ENCODE measurements at regions of chr12 and their contacts with region 1.

Region 1: GRCh38 chr12:110704748-110705147 is 15.8 kb upstream of the HVCN1 start:
- DNase-seq: no peak
- ATAC-seq: peak; percentile 70
- H3K4me3 ChIP-seq: no peak overlapping the region
- H3K27ac ChIP-seq: no peak overlapping the region
- H3K4me1 ChIP-seq: no peaks in the 10 kb centered on the region
- H3K27me3 ChIP-seq: no peaks in the 10 kb centered on the region
- CTCF ChIP-seq: no peak; the same call in 1 of the 2 replicates

Region 2: GRCh38 chr12:110718222-110718908 is 13.6 kb after region 1 on chr12:
- CTCF ChIA-PET with region 1: no interaction called
- POLR2A ChIA-PET with region 1: interaction called, 21 read pairs
- in situ Hi-C with region 1: no loop called
- intact Hi-C with region 1: no loop called
- DNase-seq: no peak
- ATAC-seq: no peak
- H3K4me3 ChIP-seq: no peak overlapping the region
- H3K27ac ChIP-seq: no peak overlapping the region
- H3K4me1 ChIP-seq: no peaks in the 10 kb centered on the region
- H3K27me3 ChIP-seq: no peaks in the 10 kb centered on the region
- CTCF ChIP-seq: no peak

Region 3: GRCh38 chr12:110826592-110827200 is 121.9 kb after region 1 on chr12:
- CTCF ChIA-PET with region 1: interaction called, 14 read pairs
- POLR2A ChIA-PET with region 1: no interaction called
- in situ Hi-C with region 1: no loop called
- intact Hi-C with region 1: loop called (anchors 2 kb)
- DNase-seq: peak; percentile 64
- ATAC-seq: peak; percentile 98
- H3K4me3 ChIP-seq: peak overlapping the region; percentile 15 to 45; a peak in 3 of 4 replicates
- H3K27ac ChIP-seq: no peak overlapping the region; the same call in 1 of the 2 replicates
- H3K4me1 ChIP-seq: no peaks in the 10 kb centered on the region; the same call in 1 of the 2 replicates
- H3K27me3 ChIP-seq: no peaks in the 10 kb centered on the region
- CTCF ChIP-seq: peak; percentile 95

Region 4: DNA sequence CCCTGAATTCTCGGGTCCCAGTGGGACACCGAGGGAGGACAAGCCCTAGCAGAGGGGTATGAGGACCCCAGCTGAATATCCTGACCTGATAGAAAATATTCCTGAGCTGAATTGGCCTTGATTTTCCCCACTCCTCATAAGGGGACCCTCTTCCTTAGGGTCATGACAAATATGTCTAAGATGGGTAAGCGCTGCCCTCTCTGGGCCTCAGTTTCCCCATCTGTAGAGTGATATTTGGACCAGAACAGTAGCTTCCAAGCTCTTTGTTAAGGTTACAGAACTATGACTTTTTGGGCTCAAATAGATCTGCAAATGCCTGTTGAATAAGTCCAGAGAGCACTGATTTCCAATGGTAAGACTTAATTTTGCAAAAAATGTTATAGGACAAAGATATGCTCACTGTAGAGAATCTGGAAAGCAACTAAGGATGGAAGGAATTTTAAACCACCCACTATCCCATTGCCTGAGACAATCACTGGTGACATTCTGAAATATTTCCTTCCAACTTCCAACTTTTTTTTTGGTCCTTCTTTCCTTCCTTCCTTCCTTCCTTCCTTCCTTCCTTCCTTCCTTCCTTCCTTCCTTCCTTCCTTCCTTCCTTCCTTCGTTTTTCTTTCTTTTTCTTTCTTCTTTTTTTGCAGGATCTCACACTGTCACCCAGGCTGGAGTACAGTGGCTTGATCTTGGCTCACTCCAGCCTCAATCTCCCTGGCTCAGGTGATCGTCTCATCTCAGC is 183.7 kb after region 1 on chr12:
- CTCF ChIA-PET with region 1: interaction called, 5 read pairs
- POLR2A ChIA-PET with region 1: no interaction called
- in situ Hi-C with region 1: no loop called
- intact Hi-C with region 1: loop called (anchors 10 kb)
- DNase-seq: no peak
- ATAC-seq: no peak; the same call in 1 of the 2 replicates
- H3K4me3 ChIP-seq: peak overlapping the region; percentile 41 to 70; a peak in 2 of 4 replicates
- H3K27ac ChIP-seq: no peak overlapping the region
- H3K4me1 ChIP-seq: no peaks in the 10 kb centered on the region
- H3K27me3 ChIP-seq: no peaks in the 10 kb centered on the region
- CTCF ChIP-seq: no peak; the same call in none of the 2 replicates

Region 5: DNA sequence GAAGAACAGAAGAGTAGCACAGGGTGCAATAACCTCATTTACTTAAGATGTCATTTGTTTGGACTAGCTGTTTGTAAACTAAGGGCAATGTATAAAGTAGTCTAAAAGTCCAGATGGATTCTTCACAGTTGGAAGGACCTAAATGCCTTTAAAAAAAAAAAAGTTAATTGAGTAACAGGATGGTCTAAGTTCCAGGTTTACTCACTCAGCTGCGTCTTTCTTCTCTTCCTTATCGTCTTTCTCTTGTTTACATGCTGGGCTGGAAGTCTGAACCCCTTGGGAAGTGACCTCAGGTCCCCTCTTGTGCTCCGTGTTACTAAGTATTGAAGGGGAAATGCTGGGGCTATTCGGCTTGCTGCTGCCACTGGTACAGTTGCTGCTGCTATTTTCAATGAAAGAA is 783.5 kb after region 1 on chr12:
- CTCF ChIA-PET with region 1: no interaction called
- POLR2A ChIA-PET with region 1: no interaction called
- in situ Hi-C with region 1: no loop called
- intact Hi-C with region 1: no loop called
- DNase-seq: no peak
- ATAC-seq: no peak
- H3K4me3 ChIP-seq: no peak overlapping the region
- H3K27ac ChIP-seq: no peak overlapping the region
- H3K4me1 ChIP-seq: no peaks in the 10 kb centered on the region
- H3K27me3 ChIP-seq: no peaks in the 10 kb centered on the region
- CTCF ChIP-seq: no peak

Measured in Panc1 (cell line).